ENCODE measurements at regions of chr9 and their contacts with region 1.

Region 1: DNA sequence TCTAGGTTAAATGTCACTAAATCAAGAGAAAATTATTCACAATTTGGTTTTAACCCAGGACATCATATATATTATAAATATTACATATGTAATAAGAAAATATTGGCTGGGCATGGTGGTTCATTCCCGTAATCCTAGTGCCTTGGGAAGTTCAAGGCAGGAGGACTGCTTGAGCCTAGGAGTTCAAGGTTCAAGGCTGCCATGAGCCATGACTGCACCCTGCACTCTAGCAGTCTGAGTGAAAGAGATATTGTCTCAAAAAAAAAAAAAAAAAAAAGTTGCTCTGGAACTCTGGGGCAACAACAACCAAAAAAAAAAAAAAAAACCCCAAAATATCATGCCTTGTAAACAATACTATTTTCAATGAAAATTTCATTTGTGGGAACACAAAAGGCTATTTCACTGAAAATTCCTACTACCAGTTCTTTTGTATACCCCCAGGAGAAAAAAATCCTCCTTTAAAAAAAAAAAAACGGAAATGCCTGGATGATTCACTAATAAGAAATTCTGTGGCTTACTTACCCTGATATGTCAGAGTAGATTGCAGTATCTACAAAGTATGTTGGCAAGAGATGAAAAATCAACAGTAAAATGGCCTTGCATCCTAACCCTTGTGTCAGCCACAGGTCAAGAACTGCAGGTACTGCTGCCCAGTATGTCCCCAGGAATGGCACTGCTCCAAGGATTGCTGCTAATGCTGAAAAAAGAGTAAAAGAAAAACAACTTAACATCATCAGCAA is 22.6 kb upstream of the CTNNAL1 start:
- DNase-seq: no peak
- ATAC-seq: peak; percentile 26

Region 2: GRCh38 chr9:108953983-108954574 is 81.8 kb before region 1 on chr9:
- intact Hi-C with region 1: loop called (anchors 5 kb)
- DNase-seq: no peak
- ATAC-seq: peak; percentile 56